HCT116 (cell line): ENCODE measurements at regions of chr6 and their contacts with region 1.

Region 1: DNA sequence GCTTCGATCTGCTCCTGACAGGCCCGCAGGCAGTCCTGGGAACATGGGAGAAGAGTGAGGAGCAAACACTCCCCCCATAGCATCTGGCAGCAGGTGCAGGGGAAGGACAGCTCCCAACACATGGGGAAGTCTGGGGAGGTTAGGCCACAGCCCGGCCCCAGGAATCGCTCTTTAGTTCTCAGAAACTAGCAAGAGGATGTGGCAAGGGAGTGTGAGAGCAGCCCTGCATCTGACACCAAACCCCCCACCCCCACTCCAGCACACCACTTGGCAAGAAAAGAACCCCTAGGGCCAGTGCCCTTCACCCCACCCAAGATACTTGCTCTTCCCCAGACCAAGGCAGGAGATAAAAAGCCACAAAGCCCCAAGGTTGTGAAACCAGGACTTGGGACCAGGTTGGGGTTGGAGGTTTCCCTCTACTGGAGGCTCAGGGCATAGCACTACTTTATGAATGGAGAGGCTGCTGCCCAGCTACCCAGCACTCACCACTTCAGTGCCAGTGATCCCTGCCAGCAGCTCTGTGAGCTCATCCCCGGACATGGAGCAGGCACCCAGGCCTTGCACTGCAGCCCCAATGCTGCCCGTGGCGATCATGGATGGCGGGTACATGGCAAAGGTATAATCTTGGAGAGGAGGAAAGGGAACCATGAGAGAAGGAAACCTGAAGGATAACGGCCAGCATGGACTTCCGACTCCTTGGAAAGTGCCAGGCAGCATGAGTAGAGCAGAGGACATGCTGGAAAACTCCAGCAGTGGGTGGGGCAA is 5.4 kb downstream of the CCND3 start:
- DNase-seq: peak; percentile 53
- ATAC-seq: peak; percentile 74
- H3K4me3 ChIP-seq: no peak overlapping the region
- H3K27ac ChIP-seq: peak overlapping the region; percentile 24; the same call in 1 of the 2 replicates
- H3K4me1 ChIP-seq: peaks cover 6 to 26% of the 10 kb centered on the region in 2 experiments; a peak in 3 of 4 replicates
- H3K27me3 ChIP-seq: no peaks in the 10 kb centered on the region
- CTCF ChIP-seq: peak; percentile 64 to 92 (median 84); a peak in 5 of 6 replicates
- POLR2A ChIP-seq: no peak
- RAD21 ChIP-seq: peak; percentile 72

Region 2: GRCh38 chr6:41801380-41801779 is 134.9 kb before region 1 on chr6:
- CTCF ChIA-PET with region 1: interaction called, 5 read pairs
- POLR2A ChIA-PET with region 1: no interaction called
- RAD21 ChIA-PET with region 1: no interaction called
- intact Hi-C with region 1: loop called (anchors 1 kb)
- DNase-seq: no peak
- ATAC-seq: peak; percentile 76
- H3K4me3 ChIP-seq: no peak overlapping the region
- H3K27ac ChIP-seq: no peak overlapping the region
- H3K4me1 ChIP-seq: no peaks in the 10 kb centered on the region
- H3K27me3 ChIP-seq: no peaks in the 10 kb centered on the region
- CTCF ChIP-seq: peak; percentile 52 to 64 (median 59); a peak in 5 of 6 replicates
- POLR2A ChIP-seq: no peak
- RAD21 ChIP-seq: peak; percentile 71

Region 3: GRCh38 chr6:41846666-41847237 is 89.5 kb before region 1 on chr6:
- CTCF ChIA-PET with region 1: interaction called, 3 read pairs
- POLR2A ChIA-PET with region 1: no interaction called
- RAD21 ChIA-PET with region 1: no interaction called
- intact Hi-C with region 1: loop called (anchors 2 kb)
- DNase-seq: peak; percentile 68
- ATAC-seq: peak; percentile 95
- H3K4me3 ChIP-seq: no peak overlapping the region
- H3K27ac ChIP-seq: peak overlapping the region; percentile 52; the same call in 1 of the 2 replicates
- H3K4me1 ChIP-seq: peaks cover 5 to 9% of the 10 kb centered on the region in 2 experiments
- H3K27me3 ChIP-seq: no peaks in the 10 kb centered on the region
- CTCF ChIP-seq: peak; percentile 78 to 87 (median 80)
- POLR2A ChIP-seq: no peak
- RAD21 ChIP-seq: peak; percentile 83

Region 4: GRCh38 chr6:42113929-42114636 is 177.8 kb after region 1 on chr6:
- CTCF ChIA-PET with region 1: no interaction called
- POLR2A ChIA-PET with region 1: no interaction called
- RAD21 ChIA-PET with region 1: no interaction called
- intact Hi-C with region 1: no loop called
- DNase-seq: peak; percentile 75
- ATAC-seq: peak; percentile 71
- H3K4me3 ChIP-seq: peak overlapping the region in 1 of 2 experiments; percentile 22; a peak in 2 of 4 replicates
- H3K27ac ChIP-seq: peak overlapping the region; percentile 37
- H3K4me1 ChIP-seq: peaks cover 37 to 49% of the 10 kb centered on the region in 2 experiments
- H3K27me3 ChIP-seq: no peaks in the 10 kb centered on the region
- CTCF ChIP-seq: no peak
- POLR2A ChIP-seq: no peak
- RAD21 ChIP-seq: no peak